Adrenal gland (tissue), 19 donors: ENCODE measurements at regions of chr21 and their contacts with region 1.

Region 1: GRCh38 chr21:28516991-28517592 is 475.6 kb downstream of the LTN1 start:
- DNase-seq: peak; percentile 51 to 85 (median 70)
- H3K4me3 ChIP-seq: no peak overlapping the region
- H3K27ac ChIP-seq: no peak overlapping the region
- H3K4me1 ChIP-seq: no peaks in the 10 kb centered on the region
- H3K27me3 ChIP-seq: no peaks in the 10 kb centered on the region
- CTCF ChIP-seq: peak; percentile 27 to 61 (median 47)
- POLR2A ChIP-seq: no peak

Region 2: GRCh38 chr21:28402616-28402989 is 114.5 kb before region 1 on chr21:
- intact Hi-C with region 1: no loop called
- DNase-seq: no peak
- H3K4me3 ChIP-seq: no peak overlapping the region
- H3K27ac ChIP-seq: no peak overlapping the region
- H3K4me1 ChIP-seq: no peaks in the 10 kb centered on the region
- H3K27me3 ChIP-seq: no peaks in the 10 kb centered on the region
- CTCF ChIP-seq: no peak
- POLR2A ChIP-seq: no peak

Region 3: GRCh38 chr21:28745131-28746016 is 228.3 kb after region 1 on chr21:
- intact Hi-C with region 1: loop called (anchors 5 to 10 kb)
- DNase-seq: peak; percentile 67 to 90 (median 72)
- H3K4me3 ChIP-seq: peak overlapping the region in 2 of 4 donors; percentile 34 to 58
- H3K27ac ChIP-seq: peak overlapping the region in 2 of 5 donors; percentile 35 to 39
- H3K4me1 ChIP-seq: peaks cover 0 to 8% of the 10 kb centered on the region in 2 donors
- H3K27me3 ChIP-seq: no peaks in the 10 kb centered on the region
- CTCF ChIP-seq: peak; percentile 83 to 100 (median 98)
- POLR2A ChIP-seq: no peak

Region 4: DNA sequence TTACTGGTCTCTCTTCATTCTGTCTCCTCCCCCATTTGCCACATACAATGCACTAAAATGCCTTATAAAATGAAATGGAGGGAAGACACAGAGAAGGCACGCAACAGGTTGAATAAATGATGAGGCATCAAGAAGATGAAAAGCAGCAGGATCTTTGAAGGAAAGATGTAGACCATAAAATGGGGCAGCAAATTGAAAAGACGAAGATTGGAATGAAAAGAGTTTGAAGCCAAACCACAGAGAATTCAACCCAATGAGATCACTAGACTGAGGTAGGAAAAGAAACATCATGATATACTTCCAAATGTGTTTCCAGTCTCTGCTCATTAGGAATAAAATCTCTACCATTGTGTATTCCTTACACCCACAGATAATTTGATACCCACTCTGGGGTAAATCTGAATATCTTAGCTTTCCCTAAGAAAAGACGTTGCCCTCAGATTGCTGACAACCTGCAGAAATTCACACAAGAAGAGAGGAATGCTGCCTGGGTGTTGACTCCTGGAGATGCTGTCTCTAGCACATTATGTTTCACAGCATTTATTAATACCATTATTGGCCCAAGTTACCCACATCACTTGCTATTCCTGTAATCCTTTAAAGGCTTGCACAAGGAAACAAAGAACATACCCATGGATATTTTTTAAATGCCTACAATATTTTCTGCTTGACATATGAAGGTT is 244.7 kb after region 1 on chr21:
- intact Hi-C with region 1: no loop called
- DNase-seq: no peak
- H3K4me3 ChIP-seq: no peak overlapping the region
- H3K27ac ChIP-seq: no peak overlapping the region
- H3K4me1 ChIP-seq: no peaks in the 10 kb centered on the region
- H3K27me3 ChIP-seq: no peaks in the 10 kb centered on the region
- CTCF ChIP-seq: no peak
- POLR2A ChIP-seq: no peak